ENCODE measurements at regions of chr6 and their contacts with region 1.

Region 1: GRCh38 chr6:30814136-30815040 is 69.9 kb upstream of the DDR1 start:
- DNase-seq: peak; percentile 88
- ATAC-seq: peak; percentile 54
- H3K4me3 ChIP-seq: peak overlapping the region in 1 of 2 experiments; percentile 32; a peak in 2 of 4 replicates
- H3K27ac ChIP-seq: peak overlapping the region; percentile 97
- H3K4me1 ChIP-seq: peaks cover 76 to 88% of the 10 kb centered on the region in 2 experiments
- H3K27me3 ChIP-seq: no peaks in the 10 kb centered on the region
- CTCF ChIP-seq: no peak
- POLR2A ChIP-seq: no peak
- RAD21 ChIP-seq: no peak

Region 2: GRCh38 chr6:30061092-30061857 is 753.1 kb before region 1 on chr6 and contains the start of gene POLR1H:
- CTCF ChIA-PET with region 1: no interaction called
- POLR2A ChIA-PET with region 1: no interaction called
- RAD21 ChIA-PET with region 1: no interaction called
- intact Hi-C with region 1: no loop called
- DNase-seq: peak; percentile 92
- ATAC-seq: peak; percentile 98
- H3K4me3 ChIP-seq: peak within 1 kb of the TSS; percentile 93 to 100
- H3K27ac ChIP-seq: peak within 1 kb of the TSS; percentile 62
- H3K4me1 ChIP-seq: peaks cover 14 to 21% of the 10 kb centered on the region in 2 experiments; a peak in 3 of 4 replicates
- H3K27me3 ChIP-seq: no peaks in the 10 kb centered on the region
- CTCF ChIP-seq: no peak
- POLR2A ChIP-seq: peak; percentile 90
- RAD21 ChIP-seq: no peak; the same call in 1 of the 2 replicates
- total RNA-seq, gene POLR1H: 42.6 TPM

Region 3: GRCh38 chr6:30678964-30679726 is 135.2 kb before region 1 on chr6:
- CTCF ChIA-PET with region 1: interaction called, 4 read pairs
- POLR2A ChIA-PET with region 1: no interaction called
- RAD21 ChIA-PET with region 1: no interaction called
- intact Hi-C with region 1: loop called (anchors 5 kb)
- DNase-seq: no peak
- ATAC-seq: peak; percentile 85
- H3K4me3 ChIP-seq: no peak overlapping the region
- H3K27ac ChIP-seq: 0 out of 2 replicates have a peak overlapping the region, but pooled peaks have one; percentile 8
- H3K4me1 ChIP-seq: peaks cover 22 to 34% of the 10 kb centered on the region in 2 experiments
- H3K27me3 ChIP-seq: no peaks in the 10 kb centered on the region
- CTCF ChIP-seq: peak in 2 of 3 experiments; percentile 96; a peak in 4 of 6 replicates
- POLR2A ChIP-seq: no peak
- RAD21 ChIP-seq: no peak

Region 4: DNA sequence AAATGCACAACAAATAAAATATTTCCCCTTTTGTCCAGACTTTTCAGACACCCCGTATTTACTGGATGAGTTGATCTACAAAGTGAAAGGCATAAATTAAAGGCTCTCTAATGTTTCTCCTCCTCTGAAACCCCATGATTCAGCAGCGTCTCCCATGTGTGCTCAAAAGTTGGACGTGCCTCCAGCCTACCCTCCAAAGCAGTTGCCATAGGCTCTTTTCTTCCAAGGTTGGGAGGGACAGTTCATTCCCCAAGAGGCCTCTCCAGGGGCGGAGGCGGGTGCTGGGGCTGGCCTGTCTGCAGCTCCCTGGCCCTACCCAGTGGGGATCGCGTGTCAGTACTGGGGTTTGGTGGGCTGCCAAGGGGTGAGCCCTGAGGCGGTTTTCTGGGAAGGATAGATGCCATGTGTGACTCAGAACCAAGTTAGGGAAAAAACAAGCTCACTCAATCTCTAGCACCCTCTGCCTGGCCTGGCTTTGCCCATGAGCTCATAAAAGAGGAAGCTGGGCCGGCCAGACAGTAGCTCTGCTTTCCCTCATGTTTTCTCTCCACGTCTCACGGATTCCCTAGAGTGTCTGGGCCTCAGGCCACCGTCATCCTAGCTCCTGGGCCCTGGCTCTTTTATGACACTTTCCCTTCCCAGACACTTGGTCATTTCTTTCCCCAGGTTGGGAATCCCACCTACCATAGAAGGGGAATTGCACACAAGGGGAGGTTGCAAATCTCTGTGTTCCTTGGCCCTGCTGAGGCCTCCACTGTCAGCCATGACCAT is 62.0 kb before region 1 on chr6:
- CTCF ChIA-PET with region 1: no interaction called
- POLR2A ChIA-PET with region 1: interaction called, 680 read pairs
- RAD21 ChIA-PET with region 1: no interaction called
- intact Hi-C with region 1: no loop called
- DNase-seq: peak; percentile 99
- ATAC-seq: peak; percentile 82
- H3K4me3 ChIP-seq: no peak overlapping the region
- H3K27ac ChIP-seq: peak overlapping the region; percentile 96
- H3K4me1 ChIP-seq: peaks cover 76 to 97% of the 10 kb centered on the region in 2 experiments
- H3K27me3 ChIP-seq: no peaks in the 10 kb centered on the region
- CTCF ChIP-seq: no peak
- POLR2A ChIP-seq: no peak
- RAD21 ChIP-seq: no peak

Region 5: GRCh38 chr6:30769088-30769852 is 45.1 kb before region 1 on chr6:
- CTCF ChIA-PET with region 1: no interaction called
- POLR2A ChIA-PET with region 1: interaction called, 80 read pairs
- RAD21 ChIA-PET with region 1: interaction called, 3 to 4 read pairs
- intact Hi-C with region 1: loop called (anchors 1 kb)
- DNase-seq: peak; percentile 96
- ATAC-seq: peak; percentile 84
- H3K4me3 ChIP-seq: peak overlapping the region; percentile 15 to 48
- H3K27ac ChIP-seq: peak overlapping the region; percentile 76
- H3K4me1 ChIP-seq: peaks cover 66 to 75% of the 10 kb centered on the region in 2 experiments
- H3K27me3 ChIP-seq: no peaks in the 10 kb centered on the region
- CTCF ChIP-seq: no peak
- POLR2A ChIP-seq: no peak
- RAD21 ChIP-seq: no peak

Region 6: GRCh38 chr6:30781743-30782424 is 32.5 kb before region 1 on chr6:
- CTCF ChIA-PET with region 1: no interaction called
- POLR2A ChIA-PET with region 1: interaction called, 44 read pairs
- RAD21 ChIA-PET with region 1: interaction called in 1 of 2 experiments, 3 read pairs
- intact Hi-C with region 1: loop called (anchors 2 kb)
- DNase-seq: peak; percentile 94
- ATAC-seq: peak; percentile 53
- H3K4me3 ChIP-seq: peak overlapping the region; percentile 27 to 48
- H3K27ac ChIP-seq: peak overlapping the region; percentile 92
- H3K4me1 ChIP-seq: peaks cover 84 to 99% of the 10 kb centered on the region in 2 experiments
- H3K27me3 ChIP-seq: no peaks in the 10 kb centered on the region
- CTCF ChIP-seq: no peak
- POLR2A ChIP-seq: no peak
- RAD21 ChIP-seq: peak; percentile 31; the same call in 1 of the 2 replicates

Region 7: DNA sequence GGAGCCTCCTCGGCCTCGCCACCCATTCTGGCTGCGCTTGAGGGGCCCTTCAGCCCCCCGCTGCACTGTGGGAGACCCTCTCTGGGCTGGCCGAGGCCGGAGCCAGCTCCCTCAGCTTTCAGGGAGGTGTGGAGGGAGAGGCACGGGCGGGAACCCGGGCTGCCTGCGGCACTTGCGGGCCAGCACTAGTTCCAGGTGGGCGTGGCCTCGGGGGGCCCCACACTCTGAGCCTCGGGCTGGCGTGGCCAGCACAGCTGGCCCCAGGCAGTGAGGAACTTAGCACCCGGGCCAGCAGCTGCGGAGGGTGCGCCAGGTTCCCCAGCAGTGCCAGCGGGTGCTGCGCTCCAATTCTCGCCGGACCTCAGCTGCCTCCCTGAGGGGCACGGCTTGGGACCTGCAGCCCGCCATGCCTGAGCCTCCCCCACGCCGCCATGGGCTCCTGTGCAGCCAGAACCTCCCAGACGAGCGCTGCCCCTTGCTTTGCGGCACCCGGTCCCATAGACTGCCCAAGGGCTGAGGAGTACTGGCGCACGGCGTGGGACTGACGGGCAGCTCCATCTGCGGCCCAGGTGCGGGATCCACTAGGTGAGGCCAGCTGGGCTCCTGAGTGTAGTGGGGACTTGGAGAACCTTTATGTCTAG is 202.4 kb after region 1 on chr6:
- CTCF ChIA-PET with region 1: no interaction called
- POLR2A ChIA-PET with region 1: interaction called, 15 read pairs
- RAD21 ChIA-PET with region 1: no interaction called
- intact Hi-C with region 1: no loop called
- DNase-seq: no peak
- ATAC-seq: no peak; the same call in 1 of the 2 replicates
- H3K4me3 ChIP-seq: no peak overlapping the region
- H3K27ac ChIP-seq: no peak overlapping the region; the same call in 1 of the 2 replicates
- H3K4me1 ChIP-seq: no peaks in the 10 kb centered on the region
- H3K27me3 ChIP-seq: no peaks in the 10 kb centered on the region
- CTCF ChIP-seq: no peak
- POLR2A ChIP-seq: no peak
- RAD21 ChIP-seq: no peak